Endothelial cell of umbilical vein (primary cell): ENCODE measurements at regions of chr12 and their contacts with region 1.

Region 1: GRCh38 chr12:24991209-24992049 is 42.5 kb upstream of the BCAT1 start:
- DNase-seq: peak; percentile 74
- H3K4me3 ChIP-seq: no peak overlapping the region
- H3K27ac ChIP-seq: no peak overlapping the region
- H3K4me1 ChIP-seq: no peaks in the 10 kb centered on the region
- H3K27me3 ChIP-seq: peaks cover 0 to under 1% of the 10 kb centered on the region in 2 experiments
- CTCF ChIP-seq: peak; percentile 17 to 32
- POLR2A ChIP-seq: no peak

Region 2: DNA sequence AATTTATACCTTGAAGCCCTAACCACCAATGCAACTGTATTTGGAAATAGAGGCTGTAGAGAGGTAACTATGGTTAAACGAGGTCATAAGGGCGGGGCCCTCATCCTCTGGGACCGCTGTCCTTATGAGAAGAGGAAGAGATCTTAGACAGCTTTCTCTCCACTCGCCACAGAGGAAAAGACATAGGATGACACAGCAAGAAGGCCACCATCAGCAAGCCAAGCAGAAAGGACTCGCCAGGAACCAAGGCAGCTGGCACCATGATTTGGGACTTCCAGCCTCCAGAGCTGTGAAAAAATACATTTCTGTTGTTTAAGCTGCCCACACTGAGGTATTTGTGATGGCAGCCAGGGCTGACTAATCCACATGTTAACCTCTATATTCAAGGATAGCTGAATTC is 12.1 kb before region 1 on chr12:
- CTCF ChIA-PET with region 1: interaction called, 14 read pairs
- POLR2A ChIA-PET with region 1: no interaction called
- dilution Hi-C with region 1: no loop called
- intact Hi-C with region 1: no loop called
- DNase-seq: no peak
- H3K4me3 ChIP-seq: no peak overlapping the region
- H3K27ac ChIP-seq: no peak overlapping the region
- H3K4me1 ChIP-seq: no peaks in the 10 kb centered on the region
- H3K27me3 ChIP-seq: no peaks in the 10 kb centered on the region
- CTCF ChIP-seq: no peak
- POLR2A ChIP-seq: no peak

Region 3: GRCh38 chr12:25130741-25131188 is 139.3 kb after region 1 on chr12:
- CTCF ChIA-PET with region 1: interaction called, 64 read pairs
- POLR2A ChIA-PET with region 1: no interaction called
- dilution Hi-C with region 1: no loop called
- intact Hi-C with region 1: loop called (anchors 1 kb)
- DNase-seq: peak; percentile 49
- H3K4me3 ChIP-seq: no peak overlapping the region
- H3K27ac ChIP-seq: no peak overlapping the region
- H3K4me1 ChIP-seq: no peaks in the 10 kb centered on the region
- H3K27me3 ChIP-seq: peaks cover 0 to 2% of the 10 kb centered on the region in 2 experiments
- CTCF ChIP-seq: peak; percentile 19 to 34
- POLR2A ChIP-seq: no peak

Region 4: GRCh38 chr12:25151476-25151875 is 160.0 kb after region 1 on chr12:
- CTCF ChIA-PET with region 1: interaction called, 96 read pairs
- POLR2A ChIA-PET with region 1: no interaction called
- dilution Hi-C with region 1: no loop called
- intact Hi-C with region 1: loop called (anchors 1 kb)
- DNase-seq: peak; percentile 84
- H3K4me3 ChIP-seq: no peak overlapping the region
- H3K27ac ChIP-seq: peak overlapping the region; percentile 45
- H3K4me1 ChIP-seq: peaks cover 6% of the 10 kb centered on the region
- H3K27me3 ChIP-seq: no peaks in the 10 kb centered on the region
- CTCF ChIP-seq: no peak
- POLR2A ChIP-seq: no peak

Region 5: DNA sequence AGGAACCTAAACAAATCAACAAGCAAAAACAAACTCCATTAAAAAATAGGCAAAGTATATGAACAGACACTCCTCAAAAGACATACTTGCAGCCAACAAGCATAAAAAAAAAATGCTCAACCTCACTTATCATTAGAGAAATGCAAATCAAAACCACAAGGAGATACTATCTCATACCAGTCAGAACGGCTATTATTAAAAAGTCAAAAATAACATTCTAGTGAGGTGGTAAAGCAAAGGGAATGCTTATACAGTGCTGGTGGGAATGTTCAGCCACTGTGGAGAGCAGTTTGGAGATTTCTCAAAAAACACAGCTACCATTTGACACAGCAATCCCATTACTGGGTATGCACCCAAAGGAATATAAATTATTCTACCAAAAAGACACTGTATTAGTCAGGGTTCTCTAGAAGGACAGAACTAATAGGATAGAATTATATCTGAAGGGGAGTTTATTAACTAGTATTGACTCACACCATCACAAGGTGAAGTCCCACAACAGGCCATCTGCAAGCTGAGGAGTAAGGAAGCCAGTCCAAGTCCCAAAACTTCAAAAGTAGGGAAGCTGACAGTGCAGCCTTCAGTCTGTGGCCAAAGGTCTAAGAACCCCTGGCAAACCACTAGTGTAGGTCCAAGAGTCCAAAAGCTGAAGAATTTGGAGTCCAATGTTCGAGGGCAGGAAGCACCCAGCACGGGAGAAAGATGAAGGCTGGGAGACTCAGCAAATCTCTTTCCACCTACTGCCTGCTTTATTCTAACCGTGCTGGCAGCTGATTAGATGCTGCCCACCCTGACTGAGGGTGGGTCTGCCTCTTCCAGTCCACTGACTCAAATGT is 360.9 kb after region 1 on chr12:
- CTCF ChIA-PET with region 1: no interaction called
- POLR2A ChIA-PET with region 1: no interaction called
- dilution Hi-C with region 1: no loop called
- intact Hi-C with region 1: no loop called
- DNase-seq: no peak
- H3K4me3 ChIP-seq: no peak overlapping the region
- H3K27ac ChIP-seq: no peak overlapping the region
- H3K4me1 ChIP-seq: no peaks in the 10 kb centered on the region
- H3K27me3 ChIP-seq: no peaks in the 10 kb centered on the region
- CTCF ChIP-seq: no peak
- POLR2A ChIP-seq: no peak